ENCODE measurements at regions of chr1 and their contacts with region 1.

Region 1: DNA sequence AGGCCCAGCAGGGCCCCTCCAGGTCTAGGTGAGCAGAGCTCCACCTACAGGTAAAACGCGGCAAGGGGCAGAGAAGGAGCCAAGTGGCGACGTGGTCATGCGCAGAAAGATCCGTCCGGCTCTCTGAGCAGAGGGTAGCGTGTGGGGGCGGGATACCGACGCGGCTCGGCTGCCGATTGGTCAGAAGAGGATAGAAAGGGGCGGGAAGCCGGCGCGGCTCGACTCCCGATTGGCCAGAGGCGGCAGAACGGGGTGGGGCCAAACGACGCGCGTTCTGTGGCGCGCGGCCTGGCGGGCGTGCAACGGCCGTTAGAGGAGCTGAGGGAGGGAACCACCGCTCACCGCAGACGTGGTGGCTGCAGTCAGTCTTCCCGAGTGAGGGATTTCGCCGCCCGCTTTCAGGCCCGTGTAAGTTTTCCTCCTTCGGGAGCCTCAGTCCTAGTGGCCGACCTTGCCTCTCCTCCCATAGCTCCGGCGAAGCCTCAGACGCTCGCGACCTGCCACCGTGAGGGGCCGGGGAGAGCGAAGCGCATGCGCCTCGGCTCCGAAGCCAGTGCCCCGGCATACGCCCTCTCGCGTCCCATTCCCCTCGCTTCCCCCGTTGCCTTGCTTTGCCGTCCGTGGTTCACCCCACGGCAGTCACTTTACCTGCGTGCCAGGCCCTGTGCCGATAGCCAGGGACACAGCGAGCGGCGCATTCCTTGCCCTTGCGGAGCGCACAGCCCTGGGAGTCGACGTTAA is at the start of gene CEP85:
- DNase-seq: peak; percentile 99
- ATAC-seq: peak; percentile 94
- H3K4me3 Mint-ChIP-seq: peak within 1 kb of the TSS; percentile 98
- H3K27ac Mint-ChIP-seq: peak within 1 kb of the TSS; percentile 92
- H3K4me1 Mint-ChIP-seq: peaks cover 27% of the 10 kb centered on the region
- H3K27me3 Mint-ChIP-seq: no peaks in the 10 kb centered on the region
- CTCF ChIP-seq: peak; percentile 26
- total RNA-seq, gene CEP85: 32.8 to 33.7 TPM

Region 2: GRCh38 chr1:26126321-26127084 is 107.6 kb before region 1 on chr1:
- CTCF ChIA-PET with region 1: interaction called, 15 read pairs
- POLR2A ChIA-PET with region 1: interaction called, 3 read pairs
- intact Hi-C with region 1: no loop called
- DNase-seq: peak; percentile 67
- ATAC-seq: peak; percentile 93
- H3K4me3 Mint-ChIP-seq: peak overlapping the region; percentile 71
- H3K27ac Mint-ChIP-seq: peak overlapping the region; percentile 91
- H3K4me1 Mint-ChIP-seq: peaks cover 41% of the 10 kb centered on the region
- H3K27me3 Mint-ChIP-seq: peaks cover 2% of the 10 kb centered on the region
- CTCF ChIP-seq: no peak

Region 3: GRCh38 chr1:26169669-26170471 is 64.2 kb before region 1 on chr1 and contains the start of gene ZNF593:
- CTCF ChIA-PET with region 1: interaction called, 77 read pairs
- POLR2A ChIA-PET with region 1: interaction called, 4 read pairs
- intact Hi-C with region 1: no loop called
- DNase-seq: peak; percentile 92
- ATAC-seq: peak; percentile 97
- H3K4me3 Mint-ChIP-seq: peak within 1 kb of the TSS; percentile 91
- H3K27ac Mint-ChIP-seq: peak within 1 kb of the TSS; percentile 90
- H3K4me1 Mint-ChIP-seq: peaks cover 11% of the 10 kb centered on the region
- H3K27me3 Mint-ChIP-seq: peaks cover under 1% of the 10 kb centered on the region
- CTCF ChIP-seq: peak; percentile 84
- total RNA-seq, gene ZNF593: 40.9 to 41.1 TPM

Region 4: GRCh38 chr1:26218906-26219494 is 15.1 kb before region 1 on chr1:
- CTCF ChIA-PET with region 1: interaction called, 15 read pairs
- POLR2A ChIA-PET with region 1: interaction called, 6 read pairs
- intact Hi-C with region 1: no loop called
- DNase-seq: no peak
- ATAC-seq: no peak
- H3K4me3 Mint-ChIP-seq: no peak overlapping the region
- H3K27ac Mint-ChIP-seq: no peak overlapping the region
- H3K4me1 Mint-ChIP-seq: no peaks in the 10 kb centered on the region
- H3K27me3 Mint-ChIP-seq: no peaks in the 10 kb centered on the region
- CTCF ChIP-seq: no peak

Region 5: DNA sequence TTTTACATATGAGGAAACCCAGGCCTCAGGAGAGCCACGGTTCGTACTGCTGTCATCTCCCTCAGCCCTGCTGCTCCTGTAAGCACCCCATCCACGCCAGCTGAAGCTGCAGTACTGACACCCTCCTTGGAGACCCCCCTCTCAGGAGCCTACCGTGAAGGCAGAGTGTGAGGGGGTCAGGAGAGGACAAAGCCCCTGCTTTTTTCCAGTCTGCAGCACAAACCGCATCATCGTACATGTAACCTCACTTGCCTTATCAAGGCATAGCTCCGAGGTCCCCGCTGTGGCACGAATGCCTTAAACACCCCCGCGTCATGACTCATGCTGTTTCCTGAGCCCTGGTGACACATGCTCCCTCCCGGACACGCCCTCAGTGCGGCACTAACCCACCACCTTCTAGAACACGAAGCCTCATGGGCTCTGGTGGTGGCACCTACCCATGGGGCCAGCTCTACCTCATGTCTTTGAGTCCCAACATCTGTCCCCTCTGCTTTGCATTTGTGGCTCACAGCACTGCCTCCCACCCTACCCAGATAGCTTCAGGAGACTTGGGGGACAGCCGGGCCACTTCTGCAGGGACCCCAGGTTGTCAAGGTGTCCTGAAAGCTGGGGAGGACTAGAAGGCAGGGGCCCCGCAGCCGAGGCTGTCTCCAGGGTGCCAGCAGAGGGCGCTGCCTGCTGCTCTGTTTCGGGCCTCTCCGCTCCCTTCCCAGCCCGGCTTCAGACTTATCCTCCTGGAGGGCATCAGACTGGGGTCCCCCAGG is 50.7 kb after region 1 on chr1:
- CTCF ChIA-PET with region 1: interaction called, 18 read pairs
- POLR2A ChIA-PET with region 1: interaction called, 6 read pairs
- intact Hi-C with region 1: no loop called
- DNase-seq: peak; percentile 100
- ATAC-seq: peak; percentile 61
- H3K4me3 Mint-ChIP-seq: peak overlapping the region; percentile 88
- H3K27ac Mint-ChIP-seq: peak overlapping the region; percentile 99
- H3K4me1 Mint-ChIP-seq: peaks cover 85% of the 10 kb centered on the region
- H3K27me3 Mint-ChIP-seq: no peaks in the 10 kb centered on the region
- CTCF ChIP-seq: peak; percentile 72

Region 6: GRCh38 chr1:26296340-26297056 is 62.4 kb after region 1 on chr1:
- CTCF ChIA-PET with region 1: no interaction called
- POLR2A ChIA-PET with region 1: no interaction called
- intact Hi-C with region 1: no loop called
- DNase-seq: no peak
- ATAC-seq: no peak
- H3K4me3 Mint-ChIP-seq: no peak overlapping the region
- H3K27ac Mint-ChIP-seq: no peak overlapping the region
- H3K4me1 Mint-ChIP-seq: peaks cover 11% of the 10 kb centered on the region
- H3K27me3 Mint-ChIP-seq: no peaks in the 10 kb centered on the region
- CTCF ChIP-seq: no peak

Region 7: DNA sequence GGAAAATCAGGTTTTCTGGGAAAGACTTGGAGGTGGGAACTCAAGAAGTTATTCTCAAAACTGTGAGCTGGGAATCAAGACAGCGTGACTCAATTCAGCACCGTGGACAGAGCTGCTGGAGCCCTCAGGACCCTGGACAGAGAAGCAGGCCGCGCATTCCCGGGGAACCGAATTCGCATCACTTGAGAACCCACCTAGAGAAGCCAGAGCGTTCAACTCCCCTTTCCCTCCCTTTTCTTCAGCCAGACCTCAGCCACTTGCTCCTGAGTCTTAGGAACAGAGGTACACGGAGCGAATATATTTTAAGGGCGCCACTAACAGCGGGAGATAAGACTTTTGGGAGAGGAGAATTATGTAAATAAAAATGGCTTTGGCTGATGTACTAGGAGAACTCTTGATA is 174.5 kb after region 1 on chr1:
- CTCF ChIA-PET with region 1: interaction called, 11 read pairs
- POLR2A ChIA-PET with region 1: no interaction called
- intact Hi-C with region 1: no loop called
- DNase-seq: peak; percentile 78
- ATAC-seq: peak; percentile 92
- H3K4me3 Mint-ChIP-seq: no peak overlapping the region
- H3K27ac Mint-ChIP-seq: no peak overlapping the region
- H3K4me1 Mint-ChIP-seq: peaks cover 23% of the 10 kb centered on the region
- H3K27me3 Mint-ChIP-seq: peaks cover 54% of the 10 kb centered on the region
- CTCF ChIP-seq: no peak

Measured in activated CD8-positive, alpha-beta T cell treated with anti-CD3 and anti-CD28 coated beads for 36 hours (primary cell).